ENCODE measurements at regions of chr2 and their contacts with region 1.

Region 1: DNA sequence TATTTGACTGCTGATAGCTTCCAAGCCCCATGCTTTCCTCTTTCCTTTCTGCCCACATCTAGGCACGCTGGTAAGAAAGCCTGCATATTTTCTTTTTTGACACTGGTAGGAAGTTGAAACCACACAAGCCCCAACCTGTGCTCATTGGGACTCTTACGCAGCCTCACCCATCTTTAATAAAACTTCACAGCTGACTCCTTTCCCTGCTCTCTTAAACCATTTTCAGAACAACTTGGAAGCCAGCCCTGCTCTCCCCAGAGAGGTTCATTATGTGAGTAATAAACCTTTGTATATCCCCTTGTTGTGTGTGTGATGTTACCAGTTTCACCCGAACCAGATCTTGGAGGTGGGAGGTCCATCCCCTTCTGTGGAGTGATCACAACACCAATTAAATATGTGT is 268.4 kb downstream of the GPD2 start:
- DNase-seq: no peak
- ATAC-seq: no peak
- H3K4me3 ChIP-seq: no peak overlapping the region
- H3K27ac ChIP-seq: no peak overlapping the region
- H3K4me1 ChIP-seq: peaks cover 19% of the 10 kb centered on the region
- H3K27me3 ChIP-seq: no peaks in the 10 kb centered on the region
- CTCF ChIP-seq: no peak

Region 2: GRCh38 chr2:156423674-156424282 is 280.8 kb before region 1 on chr2:
- CTCF ChIA-PET with region 1: no interaction called
- POLR2A ChIA-PET with region 1: no interaction called
- intact Hi-C with region 1: no loop called
- DNase-seq: no peak
- ATAC-seq: no peak
- H3K4me3 ChIP-seq: no peak overlapping the region
- H3K27ac ChIP-seq: no peak overlapping the region
- H3K4me1 ChIP-seq: no peaks in the 10 kb centered on the region
- H3K27me3 ChIP-seq: no peaks in the 10 kb centered on the region
- CTCF ChIP-seq: no peak

Region 3: GRCh38 chr2:156784020-156784701 is 79.5 kb after region 1 on chr2:
- CTCF ChIA-PET with region 1: no interaction called
- POLR2A ChIA-PET with region 1: no interaction called
- intact Hi-C with region 1: loop called (anchors 5 kb)
- DNase-seq: no peak
- ATAC-seq: peak; percentile 49
- H3K4me3 ChIP-seq: no peak overlapping the region
- H3K27ac ChIP-seq: no peak overlapping the region
- H3K4me1 ChIP-seq: peaks cover 38% of the 10 kb centered on the region
- H3K27me3 ChIP-seq: no peaks in the 10 kb centered on the region
- CTCF ChIP-seq: no peak